ENCODE measurements at regions of chr11 and their contacts with region 1.

Region 1: DNA sequence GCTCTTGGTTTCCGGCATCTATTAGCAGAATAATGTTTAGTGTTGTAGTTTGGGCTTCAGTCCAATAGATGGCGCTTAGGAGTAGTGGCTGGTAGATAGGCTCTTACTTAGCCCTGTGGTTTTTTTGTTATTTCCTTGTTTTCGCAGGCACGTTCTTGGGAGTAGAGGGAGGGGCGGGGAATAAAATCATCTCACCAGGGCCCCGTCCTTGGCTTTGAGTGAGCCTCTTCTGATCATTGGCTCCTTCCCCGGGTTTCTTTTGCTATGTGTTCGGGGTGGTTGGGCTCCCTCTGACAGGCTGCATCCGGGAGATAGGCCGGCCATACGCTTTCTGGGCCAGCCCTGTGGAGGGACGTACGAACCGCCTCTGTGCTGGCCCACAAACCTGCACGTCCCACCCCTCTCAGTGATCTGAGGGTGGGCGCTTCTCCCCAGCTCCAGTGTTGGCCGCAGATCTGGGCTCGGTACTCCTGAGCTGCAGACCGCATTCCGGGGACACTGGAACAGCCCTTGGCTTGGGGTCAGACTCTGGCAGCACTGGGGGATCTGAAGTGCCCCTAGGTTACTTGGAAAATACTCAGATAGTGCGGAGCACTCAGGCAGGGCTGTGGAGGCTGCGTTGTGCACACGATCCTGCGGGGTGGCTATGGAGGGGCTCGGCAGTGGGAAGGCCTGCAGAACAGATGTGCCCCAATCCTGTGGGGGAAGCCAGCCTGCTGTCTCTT is 217.0 kb downstream of the DYNC2H1 start:
- DNase-seq: peak; percentile 51
- H3K4me3 ChIP-seq: no peak overlapping the region
- H3K27ac ChIP-seq: no peak overlapping the region
- H3K4me1 ChIP-seq: no peaks in the 10 kb centered on the region
- CTCF ChIP-seq: peak; percentile 85

Region 2: DNA sequence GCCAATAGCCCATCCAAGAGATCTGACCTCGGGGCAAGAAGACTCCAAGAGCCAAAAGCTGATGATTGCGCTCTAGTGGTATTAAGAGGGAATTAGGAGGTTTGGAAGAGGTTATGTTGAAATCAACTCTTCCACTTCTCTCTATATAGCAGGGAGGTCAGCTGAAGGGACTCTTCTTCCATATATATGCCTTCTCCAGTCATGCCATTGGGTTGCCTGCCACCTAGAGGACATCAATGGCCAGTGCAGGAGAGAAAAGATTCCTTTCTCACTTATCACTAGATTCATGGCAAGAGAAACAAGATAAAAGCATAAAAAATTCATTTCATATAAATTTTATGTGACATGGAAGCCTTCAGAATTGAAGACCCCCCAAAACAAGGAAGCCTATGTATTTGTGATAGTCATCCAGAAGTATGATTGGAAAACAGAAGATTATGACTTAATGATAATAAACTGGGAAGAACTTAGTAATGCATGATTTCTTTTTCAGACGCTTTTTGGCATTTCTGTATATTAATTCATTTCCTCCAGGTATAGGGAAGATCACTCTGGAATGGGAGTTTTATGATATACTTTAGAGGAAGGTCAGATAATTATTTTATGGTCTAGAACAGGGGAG is 275.1 kb after region 1 on chr11:
- CTCF ChIA-PET with region 1: no interaction called
- POLR2A ChIA-PET with region 1: no interaction called
- intact Hi-C with region 1: loop called (anchors 2 kb)
- DNase-seq: peak; percentile 36
- H3K4me3 ChIP-seq: no peak overlapping the region
- H3K27ac ChIP-seq: no peak overlapping the region
- H3K4me1 ChIP-seq: no peaks in the 10 kb centered on the region
- CTCF ChIP-seq: peak; percentile 94

Measured in OCI-LY7 (cell line).